H1 (cell line): ENCODE measurements at regions of chr2 and their contacts with region 1.

Region 1: DNA sequence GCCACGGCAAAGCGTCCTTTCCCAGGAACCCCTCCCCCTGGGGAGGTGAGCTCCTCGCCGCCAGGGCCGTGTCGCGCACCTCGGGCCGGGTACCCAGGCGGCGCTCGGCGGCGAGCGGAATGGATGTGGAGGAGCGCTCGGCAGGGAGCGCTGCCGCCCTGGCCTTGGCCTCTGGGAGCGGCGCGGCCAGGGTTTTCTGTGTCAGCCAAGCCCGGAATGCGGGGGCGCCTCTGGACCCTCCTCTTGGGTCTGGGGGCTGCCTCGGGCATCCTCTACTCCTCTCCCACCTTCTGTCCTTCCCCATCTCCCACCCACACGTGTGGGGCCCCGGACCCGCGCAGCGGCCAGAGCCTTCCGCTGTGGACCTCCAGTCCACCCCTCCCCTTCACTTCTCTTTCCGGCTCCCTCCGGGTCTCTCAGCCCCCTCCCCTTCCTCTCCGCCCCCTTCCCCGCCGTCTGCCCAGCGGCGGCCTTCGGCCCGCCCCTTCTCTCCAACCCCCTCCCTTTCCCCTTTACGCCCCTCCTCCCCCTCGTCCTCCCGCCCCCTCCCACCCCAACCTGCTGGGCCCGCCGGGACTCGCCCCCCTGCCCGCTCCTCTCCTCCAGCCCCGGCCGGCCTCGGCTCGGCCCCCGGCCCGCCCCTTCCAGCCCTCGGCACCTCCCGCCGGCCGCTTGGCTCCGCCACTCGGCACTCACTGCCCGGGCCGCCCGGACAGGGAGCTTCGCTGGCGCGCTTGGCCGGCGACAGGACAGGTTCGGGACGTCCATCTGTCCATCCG is at the start of gene MERTK:
- DNase-seq: peak; percentile 78 to 90
- H3K4me3 ChIP-seq: peak within 1 kb of the TSS; percentile 62 to 98 (median 77)
- H3K27ac ChIP-seq: peak within 1 kb of the TSS; percentile 65; the same call in 1 of the 2 replicates
- H3K4me1 ChIP-seq: peaks cover 1 to 8% (median 4%) of the 10 kb centered on the region in 4 experiments; a peak in 4 of 7 replicates
- H3K27me3 ChIP-seq: peaks cover 0 to 20% (median 11%) of the 10 kb centered on the region in 4 experiments; a peak in 5 of 7 replicates
- CTCF ChIP-seq: peak; percentile 36 to 61 (median 50)
- EP300 ChIP-seq: no peak
- POLR2A ChIP-seq: peak; percentile 26 to 85; a peak in 2 of 3 replicates
- RAD21 ChIP-seq: peak; percentile 55 to 64; a peak in 3 of 4 replicates
- total RNA-seq, gene MERTK: 6.1 and 7.0 TPM in 2 replicates

Region 2: DNA sequence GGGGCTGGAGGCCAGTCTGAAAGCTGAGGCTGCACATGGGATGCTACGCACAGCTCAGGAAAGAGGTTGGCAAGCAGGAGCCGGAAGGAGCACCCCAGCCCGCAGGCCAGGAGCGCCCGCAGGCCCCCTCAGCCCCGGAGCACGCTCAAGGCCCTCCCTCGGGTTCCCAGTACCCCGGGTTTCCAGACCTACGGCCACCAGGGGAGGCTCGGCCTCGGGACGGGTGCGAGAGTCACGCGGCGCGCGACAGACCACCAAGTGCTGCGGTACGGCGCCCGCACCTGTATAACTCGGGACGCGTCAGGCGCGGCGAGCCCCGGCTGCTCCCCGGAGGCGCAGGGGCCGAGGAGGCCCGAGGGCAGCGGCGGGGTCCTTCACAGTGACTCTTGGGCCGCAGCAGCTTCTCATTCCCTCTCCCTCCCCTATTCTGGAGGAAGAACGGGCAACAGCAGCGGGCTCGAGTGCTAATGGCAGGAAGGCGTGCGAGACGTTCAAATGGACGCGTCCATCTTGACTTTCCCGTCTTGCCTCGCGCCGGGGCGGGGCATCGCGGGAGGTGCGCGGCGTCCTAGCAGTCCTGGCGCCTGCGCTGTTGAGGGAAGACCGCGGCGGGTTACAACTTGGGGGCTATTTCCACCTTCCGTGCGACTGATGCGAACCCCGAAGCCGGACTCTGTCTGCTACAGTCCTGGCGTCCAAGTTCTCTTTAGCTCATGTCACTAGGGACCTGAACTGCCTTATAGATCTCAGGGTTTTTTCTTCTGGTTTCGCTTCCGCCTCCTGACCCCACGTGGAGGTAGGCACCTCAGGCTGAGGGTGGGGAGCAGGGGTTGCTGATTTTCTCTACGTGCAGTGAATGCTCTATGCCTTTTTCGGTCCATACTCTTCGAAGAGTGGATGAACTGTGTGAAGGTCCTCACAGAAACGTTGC is 14.2 kb before region 1 on chr2 and contains the start of gene ANAPC1:
- CTCF ChIA-PET with region 1: interaction called, 20 read pairs
- POLR2A ChIA-PET with region 1: interaction called, 33 read pairs
- DNase-seq: peak in 1 of 2 experiments; percentile 93
- H3K4me3 ChIP-seq: peak within 1 kb of the TSS; percentile 78 to 96 (median 88)
- H3K27ac ChIP-seq: peak within 1 kb of the TSS; percentile 87
- H3K4me1 ChIP-seq: no peaks in the 10 kb centered on the region
- H3K27me3 ChIP-seq: no peaks in the 10 kb centered on the region
- CTCF ChIP-seq: no peak
- EP300 ChIP-seq: no peak
- POLR2A ChIP-seq: peak; percentile 82 to 94
- RAD21 ChIP-seq: no peak
- total RNA-seq, gene ANAPC1: 107 and 110 TPM in 2 replicates

Region 3: DNA sequence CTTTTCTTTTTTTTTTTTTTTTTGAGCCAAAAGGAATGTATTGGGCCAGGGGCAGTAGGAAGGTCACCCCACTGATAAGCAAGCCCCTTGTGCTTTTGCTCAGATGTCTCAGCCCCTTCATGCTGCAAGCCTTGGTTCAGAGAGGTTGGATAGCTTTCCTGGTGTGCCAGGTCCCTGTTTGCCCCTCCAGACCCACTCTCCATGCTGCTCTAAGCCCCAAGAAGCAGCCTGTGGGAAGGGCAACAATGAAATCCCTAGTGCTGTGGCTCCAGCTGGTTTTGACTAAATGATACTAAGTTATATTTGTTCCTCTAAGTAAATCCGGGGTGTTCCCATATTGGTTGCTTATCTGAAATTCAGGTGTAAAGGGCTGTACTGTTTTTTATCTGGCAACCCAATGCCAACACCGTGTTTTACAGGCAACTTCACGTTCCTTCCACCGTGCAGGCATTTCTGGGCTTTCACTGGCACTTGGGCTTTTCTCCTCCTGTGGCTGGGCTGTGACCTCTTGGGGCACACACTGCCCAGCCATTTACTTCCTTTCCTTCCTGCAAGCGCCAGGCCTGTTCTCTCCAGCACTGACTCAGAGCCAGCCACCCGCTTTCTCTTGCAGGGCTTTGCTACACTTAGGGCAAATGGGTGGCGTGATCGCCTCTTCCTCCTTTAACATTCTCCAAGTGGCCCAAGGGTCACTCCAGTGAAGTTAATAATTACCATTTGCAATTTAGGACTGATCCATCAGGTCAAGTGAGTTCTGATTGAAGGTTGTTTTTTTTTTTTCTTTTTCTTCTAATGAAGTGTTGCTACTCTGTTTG is 21.9 kb after region 1 on chr2:
- CTCF ChIA-PET with region 1: interaction called, 19 read pairs
- POLR2A ChIA-PET with region 1: no interaction called
- DNase-seq: no peak
- H3K4me3 ChIP-seq: no peak overlapping the region
- H3K27ac ChIP-seq: no peak overlapping the region
- H3K4me1 ChIP-seq: no peaks in the 10 kb centered on the region
- H3K27me3 ChIP-seq: no peaks in the 10 kb centered on the region
- CTCF ChIP-seq: no peak
- EP300 ChIP-seq: no peak
- POLR2A ChIP-seq: no peak
- RAD21 ChIP-seq: no peak